Right ventricle myocardium inferior (tissue), 1 donor: ENCODE measurements at regions of chr9 and their contacts with region 1.

Region 1: GRCh38 chr9:108776920-108777645 is 78.7 kb downstream of the ACTL7B start:
- DNase-seq: no peak
- ATAC-seq: no peak

Region 2: GRCh38 chr9:108813951-108814601 is 37.0 kb after region 1 on chr9:
- intact Hi-C with region 1: loop called (anchors 5 kb)
- DNase-seq: no peak
- ATAC-seq: peak; percentile 76